K562 (cell line): ENCODE measurements at regions of chr5 and their contacts with region 1.

Region 1: GRCh38 chr5:88140856-88141752 is 127.5 kb downstream of the TMEM161B start:
- DNase-seq: peak; percentile 96
- ATAC-seq: peak; percentile 99
- H3K4me3 ChIP-seq: peak overlapping the region; percentile 46
- H3K27ac ChIP-seq: peak overlapping the region; percentile 28; the same call in 1 of the 3 replicates
- H3K4me1 ChIP-seq: peaks cover 3 to 7% of the 10 kb centered on the region in 2 experiments; a peak in 4 of 5 replicates
- H3K27me3 ChIP-seq: peaks cover 23 to 30% of the 10 kb centered on the region in 2 experiments; a peak in 4 of 5 replicates
- CTCF ChIP-seq: peak; percentile 51 to 81 (median 59); a peak in 5 of 6 replicates
- EP300 ChIP-seq: no peak
- POLR2A ChIP-seq: no peak
- RAD21 ChIP-seq: peak; percentile 34 to 47

Region 2: GRCh38 chr5:88268385-88269184 is 127.5 kb after region 1 on chr5 and contains the start of gene TMEM161B:
- CTCF ChIA-PET with region 1: interaction called, 3 read pairs
- POLR2A ChIA-PET with region 1: no interaction called
- in situ Hi-C with region 1: no loop called
- intact Hi-C with region 1: loop called (anchors 5 kb)
- DNase-seq: peak; percentile 88 to 97 (median 90)
- ATAC-seq: peak; percentile 95
- H3K4me3 ChIP-seq: peak within 1 kb of the TSS; percentile 99
- H3K27ac ChIP-seq: peak within 1 kb of the TSS; percentile 92
- H3K4me1 ChIP-seq: peaks cover 0 to 17% of the 10 kb centered on the region in 2 experiments; a peak in 3 of 5 replicates
- H3K27me3 ChIP-seq: no peaks in the 10 kb centered on the region
- CTCF ChIP-seq: no peak
- EP300 ChIP-seq: peak; percentile 41; the same call in 1 of the 2 replicates
- POLR2A ChIP-seq: peak; percentile 87
- RAD21 ChIP-seq: no peak
- polyA plus RNA-seq, gene TMEM161B: 47.5 to 51.5 TPM

Region 3: GRCh38 chr5:88377705-88378656 is 236.9 kb after region 1 on chr5:
- CTCF ChIA-PET with region 1: no interaction called
- POLR2A ChIA-PET with region 1: no interaction called
- in situ Hi-C with region 1: no loop called
- intact Hi-C with region 1: loop called (anchors 10 kb)
- DNase-seq: peak in 2 of 4 experiments; percentile 19 to 35
- ATAC-seq: peak; percentile 81
- H3K4me3 ChIP-seq: no peak overlapping the region
- H3K27ac ChIP-seq: peak overlapping the region; percentile 37
- H3K4me1 ChIP-seq: peaks cover 0 to 10% of the 10 kb centered on the region in 2 experiments; a peak in 3 of 5 replicates
- H3K27me3 ChIP-seq: no peaks in the 10 kb centered on the region
- CTCF ChIP-seq: no peak
- EP300 ChIP-seq: peak; percentile 23; the same call in 1 of the 2 replicates
- POLR2A ChIP-seq: no peak
- RAD21 ChIP-seq: no peak

Region 4: GRCh38 chr5:88602584-88602983 is 461.5 kb after region 1 on chr5:
- CTCF ChIA-PET with region 1: no interaction called
- POLR2A ChIA-PET with region 1: no interaction called
- in situ Hi-C with region 1: no loop called
- intact Hi-C with region 1: loop called (anchors 5 kb)
- DNase-seq: peak; percentile 27 to 64 (median 49)
- ATAC-seq: peak; percentile 77
- H3K4me3 ChIP-seq: no peak overlapping the region
- H3K27ac ChIP-seq: no peak overlapping the region
- H3K4me1 ChIP-seq: no peaks in the 10 kb centered on the region
- H3K27me3 ChIP-seq: no peaks in the 10 kb centered on the region
- CTCF ChIP-seq: peak; percentile 44 to 73 (median 49)
- EP300 ChIP-seq: no peak
- POLR2A ChIP-seq: no peak
- RAD21 ChIP-seq: peak in 1 of 2 experiments; percentile 51; a peak in 2 of 4 replicates

Region 5: GRCh38 chr5:88666761-88667495 is 525.8 kb after region 1 on chr5:
- CTCF ChIA-PET with region 1: no interaction called
- POLR2A ChIA-PET with region 1: no interaction called
- in situ Hi-C with region 1: loop called (anchors 10 kb)
- intact Hi-C with region 1: loop called (anchors 5 kb)
- DNase-seq: no peak
- ATAC-seq: peak; percentile 38; the same call in 2 of the 3 replicates
- H3K4me3 ChIP-seq: 0 out of 2 replicates have a peak overlapping the region, but pooled peaks have one; percentile 2
- H3K27ac ChIP-seq: no peak overlapping the region
- H3K4me1 ChIP-seq: no peaks in the 10 kb centered on the region
- H3K27me3 ChIP-seq: peaks cover under 1 to 10% of the 10 kb centered on the region in 2 experiments; a peak in 4 of 5 replicates
- CTCF ChIP-seq: no peak
- EP300 ChIP-seq: no peak
- POLR2A ChIP-seq: no peak
- RAD21 ChIP-seq: no peak

Region 6: GRCh38 chr5:88680253-88681132 is 539.4 kb after region 1 on chr5:
- CTCF ChIA-PET with region 1: no interaction called
- POLR2A ChIA-PET with region 1: no interaction called
- in situ Hi-C with region 1: loop called (anchors 10 kb)
- intact Hi-C with region 1: loop called (anchors 5 kb)
- DNase-seq: peak; percentile 75 to 90 (median 86)
- ATAC-seq: peak; percentile 98
- H3K4me3 ChIP-seq: peak overlapping the region; percentile 35
- H3K27ac ChIP-seq: no peak overlapping the region
- H3K4me1 ChIP-seq: peaks cover 0 to 26% of the 10 kb centered on the region in 2 experiments; a peak in 3 of 5 replicates
- H3K27me3 ChIP-seq: peaks cover 30 to 49% of the 10 kb centered on the region in 2 experiments; a peak in 4 of 5 replicates
- CTCF ChIP-seq: peak; percentile 78 to 90 (median 83)
- EP300 ChIP-seq: no peak
- POLR2A ChIP-seq: no peak
- RAD21 ChIP-seq: peak; percentile 90 to 93